ENCODE measurements at regions of chr7 and their contacts with region 1.

Region 1: GRCh38 chr7:148940702-148941597 is 56.9 kb upstream of the EZH2 start:
- DNase-seq: peak; percentile 91
- ATAC-seq: peak; percentile 80
- H3K4me3 ChIP-seq: peak overlapping the region; percentile 85 to 98 (median 89)
- H3K4me3 Mint-ChIP-seq: peak overlapping the region; percentile 95
- H3K27ac ChIP-seq: peak overlapping the region; percentile 77 to 88
- H3K27ac Mint-ChIP-seq: peak overlapping the region; percentile 97
- H3K4me1 ChIP-seq: peaks cover 6 to 12% of the 10 kb centered on the region in 2 donors
- H3K4me1 Mint-ChIP-seq: peaks cover 13% of the 10 kb centered on the region
- H3K27me3 ChIP-seq: no peaks in the 10 kb centered on the region
- H3K27me3 Mint-ChIP-seq: no peaks in the 10 kb centered on the region
- CTCF ChIP-seq: no peak

Region 2: GRCh38 chr7:148575640-148576411 is 365.1 kb before region 1 on chr7:
- CTCF ChIA-PET with region 1: interaction called, 11 read pairs
- POLR2A ChIA-PET with region 1: no interaction called
- intact Hi-C with region 1: no loop called
- DNase-seq: peak; percentile 75
- ATAC-seq: peak; percentile 82
- H3K4me3 ChIP-seq: no peak overlapping the region
- H3K4me3 Mint-ChIP-seq: no peak overlapping the region
- H3K27ac ChIP-seq: no peak overlapping the region
- H3K27ac Mint-ChIP-seq: no peak overlapping the region
- H3K4me1 ChIP-seq: peaks cover 0 to 5% of the 10 kb centered on the region in 2 donors
- H3K4me1 Mint-ChIP-seq: no peaks in the 10 kb centered on the region
- H3K27me3 ChIP-seq: no peaks in the 10 kb centered on the region
- H3K27me3 Mint-ChIP-seq: no peaks in the 10 kb centered on the region
- CTCF ChIP-seq: peak; percentile 83

Region 3: DNA sequence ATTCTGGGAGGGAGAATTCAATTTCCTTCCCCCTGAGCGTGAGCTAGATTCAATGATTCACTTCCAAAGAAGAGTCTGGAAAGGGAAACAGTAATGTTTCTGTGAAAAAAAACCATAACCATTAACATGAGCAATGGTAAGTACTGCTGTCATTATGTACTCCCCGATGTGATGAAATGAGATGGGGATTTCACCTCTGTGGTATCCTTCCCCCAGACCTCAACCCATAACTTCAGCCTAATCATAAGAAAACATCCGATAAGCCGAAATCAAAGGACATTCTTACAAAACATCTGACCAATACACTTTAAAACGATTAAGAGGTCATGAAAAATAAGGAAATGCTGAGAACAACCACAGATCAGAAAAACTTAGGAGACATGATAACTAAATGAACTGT is 84.1 kb before region 1 on chr7:
- CTCF ChIA-PET with region 1: interaction called, 16 read pairs
- POLR2A ChIA-PET with region 1: no interaction called
- intact Hi-C with region 1: loop called (anchors 2 kb)
- DNase-seq: no peak
- ATAC-seq: no peak
- H3K4me3 ChIP-seq: no peak overlapping the region
- H3K4me3 Mint-ChIP-seq: no peak overlapping the region
- H3K27ac ChIP-seq: no peak overlapping the region
- H3K27ac Mint-ChIP-seq: no peak overlapping the region
- H3K4me1 ChIP-seq: no peaks in the 10 kb centered on the region
- H3K4me1 Mint-ChIP-seq: peaks cover 12% of the 10 kb centered on the region
- H3K27me3 ChIP-seq: no peaks in the 10 kb centered on the region
- H3K27me3 Mint-ChIP-seq: no peaks in the 10 kb centered on the region
- CTCF ChIP-seq: no peak

Measured in B cell (primary cell).